BJ (cell line): ENCODE measurements at regions of chr15 and their contacts with region 1.

Region 1: DNA sequence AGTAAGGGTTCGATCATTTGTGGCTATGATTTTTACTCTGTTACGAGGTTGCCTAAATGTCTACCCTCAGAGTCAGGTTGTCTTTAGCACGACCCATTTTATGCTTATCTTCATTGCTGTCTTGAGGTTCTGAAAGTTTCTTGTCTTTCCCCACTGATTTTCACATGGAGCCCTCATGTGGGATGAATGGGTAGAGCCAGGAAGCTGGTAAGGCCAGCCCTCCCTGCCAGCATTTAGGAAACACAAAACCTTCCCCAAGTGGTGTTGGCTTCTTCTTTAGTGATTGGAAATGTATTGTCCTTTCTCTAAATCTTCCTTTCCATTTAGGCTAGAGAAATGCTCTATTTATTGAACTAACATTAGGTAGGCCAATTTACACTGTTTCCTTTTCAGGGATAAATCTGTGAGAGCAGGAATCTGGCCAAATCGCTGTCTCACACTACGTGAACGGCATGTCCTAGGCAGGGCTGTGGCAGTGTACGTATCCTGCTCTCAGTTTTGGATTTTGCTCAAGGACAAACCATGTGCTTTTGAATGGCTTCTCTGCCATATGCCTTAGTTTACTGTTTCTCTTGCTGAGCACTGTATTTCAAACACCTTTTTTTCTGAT is 43.7 kb downstream of the MYZAP start:
- DNase-seq: no peak
- H3K4me3 ChIP-seq: no peak overlapping the region
- H3K27me3 ChIP-seq: no peaks in the 10 kb centered on the region
- CTCF ChIP-seq: 0 out of 2 replicates have a peak, but pooled peaks have one; percentile 15

Region 2: GRCh38 chr15:57485869-57486268 is 149.5 kb before region 1 on chr15:
- CTCF ChIA-PET with region 1: no interaction called
- POLR2A ChIA-PET with region 1: no interaction called
- DNase-seq: peak; percentile 26
- H3K4me3 ChIP-seq: no peak overlapping the region
- H3K27me3 ChIP-seq: no peaks in the 10 kb centered on the region
- CTCF ChIP-seq: no peak

Region 3: GRCh38 chr15:57667171-57667849 is 31.9 kb after region 1 on chr15:
- CTCF ChIA-PET with region 1: interaction called, 3 read pairs
- POLR2A ChIA-PET with region 1: interaction called, 13 read pairs
- DNase-seq: peak; percentile 68
- H3K4me3 ChIP-seq: no peak overlapping the region
- H3K27me3 ChIP-seq: no peaks in the 10 kb centered on the region
- CTCF ChIP-seq: peak; percentile 54